ENCODE measurements at regions of chr5 and their contacts with region 1.

Region 1: GRCh38 chr5:68962757-68963484 is 130.9 kb upstream of the SLC30A5 start:
- DNase-seq: peak; percentile 79
- H3K4me3 ChIP-seq: peak overlapping the region; percentile 52
- H3K27ac ChIP-seq: no peak overlapping the region
- H3K4me1 ChIP-seq: no peaks in the 10 kb centered on the region
- H3K27me3 ChIP-seq: no peaks in the 10 kb centered on the region

Region 2: DNA sequence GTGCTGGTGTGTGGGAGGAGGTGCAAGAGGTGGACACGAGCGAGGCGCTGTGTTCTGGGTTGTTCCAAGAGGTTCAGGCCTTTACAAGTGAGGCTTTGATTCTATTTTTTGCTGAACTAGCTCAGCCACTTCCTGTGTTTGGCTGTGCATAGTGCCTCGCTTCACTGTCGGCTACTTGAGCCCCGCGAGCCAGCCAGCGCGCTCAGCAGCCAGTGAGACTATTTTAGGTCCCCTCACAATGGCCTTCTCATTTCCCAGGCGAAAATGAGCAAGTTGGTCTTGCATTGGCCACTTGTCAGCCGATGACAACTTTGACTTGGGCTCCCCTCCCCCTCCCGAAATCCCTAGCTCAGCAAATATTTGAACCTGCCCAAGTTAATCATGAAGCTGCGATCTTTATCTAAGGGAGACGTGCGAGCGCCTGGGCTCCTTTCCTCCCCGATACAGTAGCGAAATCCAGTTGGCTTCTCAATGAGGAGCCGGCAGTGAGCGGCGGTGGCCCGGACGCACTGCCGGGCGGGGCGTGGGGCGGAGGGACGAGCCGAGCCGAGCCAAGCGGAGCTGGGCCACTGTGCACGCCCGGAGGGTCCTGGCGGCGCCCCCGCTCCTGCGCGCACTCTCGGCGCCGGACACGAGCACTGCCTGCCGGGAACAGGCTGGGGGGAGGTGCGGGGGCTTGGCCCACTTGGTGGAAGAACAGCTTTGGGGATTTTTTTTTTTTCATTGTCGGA is 674.8 kb before region 1 on chr5:
- in situ Hi-C with region 1: loop called (anchors 10 kb)
- DNase-seq: peak; percentile 78
- H3K4me3 ChIP-seq: peak overlapping the region; percentile 77
- H3K27ac ChIP-seq: peak overlapping the region; percentile 25
- H3K4me1 ChIP-seq: peaks cover 61% of the 10 kb centered on the region
- H3K27me3 ChIP-seq: no peaks in the 10 kb centered on the region

Region 3: DNA sequence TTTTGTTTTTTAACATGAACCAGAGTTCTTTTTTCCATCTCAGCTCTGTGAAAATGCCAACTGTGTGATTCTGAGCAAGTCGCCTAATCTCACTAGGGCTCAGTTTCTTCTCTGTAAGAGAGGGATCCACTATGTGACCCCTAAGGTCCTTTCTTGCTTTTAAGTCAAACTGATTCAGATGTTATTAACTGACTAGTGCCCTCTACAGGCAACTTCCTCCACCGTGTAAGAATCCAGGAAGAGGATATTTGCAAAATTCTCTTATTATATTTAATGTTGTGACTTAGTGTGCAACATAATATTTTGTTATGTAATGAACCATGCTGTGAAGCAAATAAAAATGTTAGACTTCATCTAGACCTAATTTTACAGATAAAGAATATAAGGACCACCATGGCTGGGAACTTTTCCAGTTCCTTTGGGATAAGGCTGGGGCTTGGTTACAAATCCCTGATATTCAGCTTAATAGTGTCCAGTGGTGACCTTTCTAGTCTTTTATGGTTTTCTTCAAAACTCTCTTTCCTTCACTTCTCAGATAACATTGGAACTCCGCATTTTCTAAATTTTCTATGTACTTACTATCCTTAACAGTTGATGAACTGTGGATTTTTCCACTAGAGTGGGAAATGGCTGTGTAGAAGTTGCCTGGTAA is 502.6 kb before region 1 on chr5:
- in situ Hi-C with region 1: loop called (anchors 25 kb)
- DNase-seq: peak; percentile 71
- H3K4me3 ChIP-seq: no peak overlapping the region
- H3K27ac ChIP-seq: no peak overlapping the region
- H3K4me1 ChIP-seq: peaks cover 18% of the 10 kb centered on the region
- H3K27me3 ChIP-seq: no peaks in the 10 kb centered on the region

Region 4: GRCh38 chr5:69317391-69317790 is 354.5 kb after region 1 on chr5:
- in situ Hi-C with region 1: no loop called
- DNase-seq: no peak
- H3K4me3 ChIP-seq: no peak overlapping the region
- H3K27ac ChIP-seq: no peak overlapping the region
- H3K4me1 ChIP-seq: no peaks in the 10 kb centered on the region
- H3K27me3 ChIP-seq: no peaks in the 10 kb centered on the region

Measured in GM23248 (cell line).